ENCODE measurements at regions of chr1 and their contacts with region 1.

Region 1: GRCh38 chr1:162732566-162733335 is 57.8 kb upstream of the HSD17B7 start:
- DNase-seq: peak; percentile 68
- ATAC-seq: peak; percentile 93
- H3K4me3 ChIP-seq: peak overlapping the region in 1 of 3 experiments; percentile 15; a peak in 1 of 6 replicates
- H3K27ac ChIP-seq: peak overlapping the region; percentile 57
- H3K4me1 ChIP-seq: peaks cover 28% of the 10 kb centered on the region
- H3K27me3 ChIP-seq: no peaks in the 10 kb centered on the region
- CTCF ChIP-seq: no peak
- EP300 ChIP-seq: no peak
- POLR2A ChIP-seq: no peak
- RAD21 ChIP-seq: no peak

Region 2: GRCh38 chr1:162487241-162487640 is 245.5 kb before region 1 on chr1:
- CTCF ChIA-PET with region 1: no interaction called
- POLR2A ChIA-PET with region 1: no interaction called
- in situ Hi-C with region 1: no loop called
- intact Hi-C with region 1: no loop called
- DNase-seq: no peak
- ATAC-seq: no peak
- H3K4me3 ChIP-seq: no peak overlapping the region
- H3K27ac ChIP-seq: no peak overlapping the region
- H3K4me1 ChIP-seq: no peaks in the 10 kb centered on the region
- H3K27me3 ChIP-seq: peaks cover 2 to 25% of the 10 kb centered on the region in 2 experiments; a peak in 4 of 5 replicates
- CTCF ChIP-seq: 0 out of 2 replicates have a peak, but pooled peaks have one; percentile 4
- EP300 ChIP-seq: no peak
- POLR2A ChIP-seq: no peak
- RAD21 ChIP-seq: no peak

Region 3: DNA sequence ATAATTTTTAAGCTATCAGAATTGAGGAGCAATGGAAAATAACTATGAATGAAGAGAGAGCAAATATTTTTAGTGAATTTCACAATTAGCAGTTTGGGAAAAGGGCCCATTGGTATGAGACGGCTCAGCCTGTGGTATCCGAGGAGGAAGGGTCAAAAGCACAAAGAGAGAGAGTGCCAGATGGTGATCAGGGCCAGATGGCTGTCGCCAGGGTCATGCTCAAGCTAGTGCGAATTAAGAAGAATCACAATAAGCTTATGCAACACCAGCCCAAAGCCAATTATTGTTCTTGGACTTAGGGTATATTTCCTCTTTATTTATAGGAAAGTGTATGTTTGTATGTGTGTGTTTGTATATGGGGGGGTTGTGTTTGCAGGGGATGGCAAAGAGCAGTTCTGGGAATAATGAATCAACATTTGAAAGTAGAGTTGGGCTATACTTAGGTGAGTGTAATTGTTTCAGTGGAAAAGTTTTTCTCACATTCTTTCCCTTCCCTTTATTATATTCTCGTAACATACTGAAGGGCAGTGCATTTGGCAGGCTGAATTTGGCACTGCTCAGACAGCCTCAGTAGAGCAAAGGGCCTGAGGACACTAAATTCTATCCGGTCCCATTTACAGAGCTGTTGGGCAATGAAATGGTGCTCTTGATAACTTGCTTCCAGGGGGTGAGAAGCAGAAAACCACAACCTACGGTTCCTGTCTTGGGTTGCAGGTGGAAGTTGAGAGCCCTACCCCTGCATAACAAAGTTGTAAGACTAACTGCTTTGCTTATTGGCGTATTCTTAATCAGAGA is 119.9 kb before region 1 on chr1:
- CTCF ChIA-PET with region 1: no interaction called
- POLR2A ChIA-PET with region 1: no interaction called
- in situ Hi-C with region 1: no loop called
- intact Hi-C with region 1: loop called (anchors 5 kb)
- DNase-seq: peak; percentile 4
- ATAC-seq: peak; percentile 58
- H3K4me3 ChIP-seq: no peak overlapping the region
- H3K27ac ChIP-seq: no peak overlapping the region
- H3K4me1 ChIP-seq: peaks cover 19% of the 10 kb centered on the region
- H3K27me3 ChIP-seq: no peaks in the 10 kb centered on the region
- CTCF ChIP-seq: no peak
- EP300 ChIP-seq: no peak
- POLR2A ChIP-seq: no peak
- RAD21 ChIP-seq: no peak

Region 4: DNA sequence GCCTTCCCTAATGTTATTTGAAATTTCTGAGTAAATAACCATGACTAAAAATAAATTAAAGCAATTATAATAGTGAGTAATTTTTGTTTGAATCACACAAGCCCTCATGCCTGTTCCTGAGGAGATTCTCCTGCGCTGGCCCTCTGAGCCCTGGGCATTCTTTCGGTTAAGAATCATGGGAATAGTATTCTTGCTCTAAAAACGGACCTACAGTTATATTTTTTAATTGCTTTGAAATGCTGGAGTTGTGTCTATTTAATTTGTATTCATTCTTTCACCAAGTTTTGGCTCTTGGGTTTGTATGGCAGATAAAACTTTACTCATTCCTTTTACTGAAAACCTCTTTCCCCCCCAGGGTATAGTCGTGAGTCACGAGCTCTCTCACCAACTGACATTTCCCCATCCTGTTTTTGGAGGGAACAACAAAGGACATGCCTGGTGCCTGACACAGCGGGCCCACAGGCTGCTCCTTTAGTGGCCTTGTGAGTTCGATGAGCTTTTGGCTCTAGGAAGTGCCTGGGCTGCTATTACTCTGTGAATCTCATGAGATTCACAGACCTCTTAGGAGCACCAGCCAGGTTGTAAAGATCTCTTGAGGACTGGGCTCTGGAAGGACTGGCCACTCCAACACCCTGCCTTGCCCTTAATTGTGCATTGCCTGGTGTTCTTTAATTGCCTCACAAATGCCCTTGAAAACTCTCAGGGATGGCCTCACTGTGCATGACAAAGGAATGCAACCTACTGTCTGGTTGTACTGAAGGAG is 41.9 kb before region 1 on chr1:
- CTCF ChIA-PET with region 1: no interaction called
- POLR2A ChIA-PET with region 1: no interaction called
- in situ Hi-C with region 1: no loop called
- intact Hi-C with region 1: loop called (anchors 5 kb)
- DNase-seq: no peak
- ATAC-seq: no peak
- H3K4me3 ChIP-seq: no peak overlapping the region
- H3K27ac ChIP-seq: no peak overlapping the region
- H3K4me1 ChIP-seq: peaks cover 35% of the 10 kb centered on the region
- H3K27me3 ChIP-seq: no peaks in the 10 kb centered on the region
- CTCF ChIP-seq: no peak
- EP300 ChIP-seq: no peak
- POLR2A ChIP-seq: no peak
- RAD21 ChIP-seq: no peak

Measured in HepG2 (cell line).